ENCODE measurements at regions of chr6 and their contacts with region 1.

Region 1: GRCh38 chr6:137094411-137095008 is 49.7 kb upstream of the IL20RA start:
- DNase-seq: peak; percentile 56 to 72
- H3K4me3 ChIP-seq: no peak overlapping the region
- H3K27ac ChIP-seq: no peak overlapping the region
- H3K4me1 ChIP-seq: no peaks in the 10 kb centered on the region
- H3K27me3 ChIP-seq: no peaks in the 10 kb centered on the region
- CTCF ChIP-seq: peak; percentile 72 to 86 (median 79)
- POLR2A ChIP-seq: no peak

Region 2: GRCh38 chr6:137313928-137314855 is 219.7 kb after region 1 on chr6:
- intact Hi-C with region 1: loop called (anchors 5 kb)
- DNase-seq: peak; percentile 59 to 76
- H3K4me3 ChIP-seq: no peak overlapping the region
- H3K27ac ChIP-seq: no peak overlapping the region
- H3K4me1 ChIP-seq: no peaks in the 10 kb centered on the region
- H3K27me3 ChIP-seq: no peaks in the 10 kb centered on the region
- CTCF ChIP-seq: peak; percentile 61 to 82 (median 74)
- POLR2A ChIP-seq: no peak

Measured in uterus (tissue), 4 donors.